ENCODE measurements at regions of chr6 and their contacts with region 1.

Region 1: DNA sequence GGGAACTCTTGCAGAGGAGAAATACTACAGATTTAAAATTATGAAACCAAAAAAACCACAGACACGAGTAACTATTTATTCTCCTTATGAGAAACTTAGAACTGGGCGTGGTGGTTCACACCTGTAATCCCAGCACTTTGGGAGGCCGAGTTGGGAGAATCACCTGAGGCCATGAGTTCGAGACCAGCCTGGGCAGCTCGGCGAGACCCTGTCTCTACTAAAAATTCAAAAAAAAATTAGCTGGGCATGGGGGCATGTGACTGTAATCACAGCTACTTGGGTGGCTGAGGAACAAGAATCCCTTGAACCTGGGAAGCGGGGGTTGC is 36.8 kb downstream of the SSR1 start:
- DNase-seq: no peak
- H3K4me3 ChIP-seq: no peak overlapping the region
- H3K4me3 Mint-ChIP-seq: no peak overlapping the region
- H3K27ac ChIP-seq: no peak overlapping the region
- H3K27ac Mint-ChIP-seq: peak overlapping the region in 1 of 7 donors; percentile 5
- H3K4me1 ChIP-seq: no peaks in the 10 kb centered on the region
- H3K4me1 Mint-ChIP-seq: peaks cover 0 to 10% (median 8%) of the 10 kb centered on the region in 4 donors
- H3K27me3 ChIP-seq: no peaks in the 10 kb centered on the region
- H3K27me3 Mint-ChIP-seq: no peaks in the 10 kb centered on the region

Region 2: GRCh38 chr6:7261032-7261841 is 14.9 kb before region 1 on chr6:
- CTCF ChIA-PET with region 1: interaction called, 55 read pairs
- POLR2A ChIA-PET with region 1: no interaction called
- intact Hi-C with region 1: no loop called
- DNase-seq: peak in 3 of 5 donors; percentile 7 to 19 (median 9)
- H3K4me3 ChIP-seq: peak overlapping the region; percentile 34 to 38
- H3K4me3 Mint-ChIP-seq: peak overlapping the region; percentile 77 to 93 (median 89)
- H3K27ac ChIP-seq: no peak overlapping the region
- H3K27ac Mint-ChIP-seq: peak overlapping the region in 4 of 7 donors; percentile 64 to 85 (median 74)
- H3K4me1 ChIP-seq: peaks cover 17% of the 10 kb centered on the region
- H3K4me1 Mint-ChIP-seq: peaks cover 7 to 23% (median 14%) of the 10 kb centered on the region in 4 donors
- H3K27me3 ChIP-seq: no peaks in the 10 kb centered on the region
- H3K27me3 Mint-ChIP-seq: peaks cover 6 to 7% of the 10 kb centered on the region in 2 donors

Region 3: GRCh38 chr6:7589949-7590917 is 314.1 kb after region 1 on chr6 and contains the start of gene SNRNP48:
- CTCF ChIA-PET with region 1: interaction called, 16 read pairs
- POLR2A ChIA-PET with region 1: interaction called, 3 read pairs
- intact Hi-C with region 1: no loop called
- DNase-seq: peak; percentile 85 to 92 (median 87)
- H3K4me3 ChIP-seq: peak within 1 kb of the TSS; percentile 45 to 56
- H3K4me3 Mint-ChIP-seq: peak within 1 kb of the TSS; percentile 99 to 100 (median 99)
- H3K27ac ChIP-seq: peak within 1 kb of the TSS; percentile 64
- H3K27ac Mint-ChIP-seq: peak within 1 kb of the TSS; percentile 89 to 99 (median 96)
- H3K4me1 ChIP-seq: peaks cover 31% of the 10 kb centered on the region
- H3K4me1 Mint-ChIP-seq: peaks cover 37 to 48% (median 44%) of the 10 kb centered on the region in 4 donors
- H3K27me3 ChIP-seq: no peaks in the 10 kb centered on the region
- H3K27me3 Mint-ChIP-seq: no peaks in the 10 kb centered on the region
- total RNA-seq, gene SNRNP48: 24.0 to 24.4 TPM

Region 4: GRCh38 chr6:7615611-7616383 is 339.6 kb after region 1 on chr6:
- CTCF ChIA-PET with region 1: interaction called, 225 read pairs
- POLR2A ChIA-PET with region 1: interaction called, 3 read pairs
- intact Hi-C with region 1: loop called (anchors 1 kb)
- DNase-seq: peak in 4 of 5 donors; percentile 34 to 43 (median 40)
- H3K4me3 ChIP-seq: no peak overlapping the region
- H3K4me3 Mint-ChIP-seq: peak overlapping the region; percentile 1 to 63 (median 16)
- H3K27ac ChIP-seq: no peak overlapping the region
- H3K27ac Mint-ChIP-seq: peak overlapping the region in 2 of 7 donors; percentile 13 to 71
- H3K4me1 ChIP-seq: peaks cover 4% of the 10 kb centered on the region
- H3K4me1 Mint-ChIP-seq: peaks cover 5 to 7% (median 6%) of the 10 kb centered on the region in 4 donors
- H3K27me3 ChIP-seq: no peaks in the 10 kb centered on the region
- H3K27me3 Mint-ChIP-seq: peaks cover 0 to 3% of the 10 kb centered on the region in 2 donors

Region 5: DNA sequence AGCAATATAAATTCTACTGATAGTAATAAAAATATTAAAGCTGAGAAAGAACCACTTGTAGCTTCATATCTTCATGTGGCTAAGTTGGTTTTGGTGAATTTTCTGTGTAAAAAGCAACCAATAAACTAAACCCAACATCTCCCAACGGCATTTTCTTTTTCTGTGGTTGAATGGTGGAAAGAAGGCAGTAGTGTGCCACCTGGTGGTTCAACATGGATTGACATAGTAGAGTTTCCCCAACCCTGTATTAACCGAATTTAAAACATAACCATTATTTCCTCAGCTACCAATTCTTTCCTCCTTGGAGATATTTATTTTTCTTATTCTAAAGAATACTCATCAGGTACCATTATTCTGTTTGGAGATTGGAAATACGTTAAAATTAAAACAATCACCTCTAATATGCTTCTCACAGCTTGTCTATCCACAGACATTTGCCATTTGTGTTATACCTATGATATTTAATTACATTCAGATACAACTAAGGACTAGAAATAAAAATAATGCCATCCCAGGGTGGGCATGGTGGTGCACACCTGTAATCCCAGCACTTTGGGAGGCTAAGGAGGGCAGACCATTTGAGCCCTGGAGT is 943.3 kb after region 1 on chr6:
- CTCF ChIA-PET with region 1: interaction called, 13 read pairs
- POLR2A ChIA-PET with region 1: no interaction called
- intact Hi-C with region 1: loop called (anchors 5 kb)
- DNase-seq: peak in 4 of 5 donors; percentile 19 to 39 (median 26)
- H3K4me3 ChIP-seq: no peak overlapping the region
- H3K4me3 Mint-ChIP-seq: no peak overlapping the region
- H3K27ac ChIP-seq: no peak overlapping the region
- H3K27ac Mint-ChIP-seq: no peak overlapping the region
- H3K4me1 ChIP-seq: no peaks in the 10 kb centered on the region
- H3K4me1 Mint-ChIP-seq: no peaks in the 10 kb centered on the region
- H3K27me3 ChIP-seq: no peaks in the 10 kb centered on the region
- H3K27me3 Mint-ChIP-seq: peaks cover 2 to 9% of the 10 kb centered on the region in 2 donors